Right ventricle myocardium inferior (tissue), 1 donor: ENCODE measurements at regions of chr3 and their contacts with region 1.

Region 1: GRCh38 chr3:40580494-40581091 is 55.8 kb downstream of the ZNF621 start:
- DNase-seq: no peak
- ATAC-seq: no peak

Region 2: GRCh38 chr3:40713795-40714194 is 133.2 kb after region 1 on chr3:
- intact Hi-C with region 1: loop called (anchors 5 kb)
- DNase-seq: no peak
- ATAC-seq: no peak

Region 3: GRCh38 chr3:40780291-40780924 is 199.8 kb after region 1 on chr3:
- intact Hi-C with region 1: loop called (anchors 5 kb)
- DNase-seq: peak; percentile 86
- ATAC-seq: peak; percentile 80

Region 4: DNA sequence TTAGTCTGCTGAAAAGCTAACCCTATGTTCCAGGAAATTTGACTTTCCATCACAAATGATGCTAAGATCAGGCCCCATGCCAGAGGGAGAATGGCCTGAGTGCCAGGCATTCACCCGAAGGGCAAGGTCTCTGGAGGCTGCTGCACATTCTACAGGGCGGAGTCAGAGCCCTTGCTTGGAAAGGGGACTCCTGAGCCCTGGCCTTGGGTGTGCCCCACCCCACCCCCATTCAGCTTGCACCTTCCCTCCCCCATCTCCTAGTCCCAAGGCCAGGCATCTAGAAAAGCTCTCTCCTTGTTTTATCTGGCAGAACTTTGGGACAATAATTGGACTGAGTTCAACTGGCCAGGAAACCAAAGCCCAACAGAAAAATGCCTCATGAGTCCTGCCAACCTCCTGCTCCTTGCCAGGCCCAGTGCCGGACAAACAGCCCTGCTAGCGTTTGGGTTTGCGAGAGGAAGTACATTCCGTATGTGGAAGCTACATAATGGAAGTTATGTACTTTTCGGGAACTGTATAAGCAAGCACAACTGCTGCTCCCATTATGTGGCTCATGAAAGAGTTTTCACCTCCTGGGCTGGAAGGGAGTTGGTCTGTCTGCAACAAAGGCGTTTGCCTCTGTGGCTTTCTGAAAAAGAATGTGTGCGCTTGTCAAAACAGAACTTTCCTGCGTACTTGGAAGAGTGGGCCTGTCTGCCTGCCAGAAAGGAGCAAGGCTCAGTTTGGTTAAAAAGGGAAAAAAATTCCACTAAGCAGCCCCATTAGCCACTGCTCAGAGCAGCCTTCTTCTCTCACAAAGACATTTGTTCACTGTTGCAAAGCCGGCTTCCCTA is 297.3 kb after region 1 on chr3:
- intact Hi-C with region 1: loop called (anchors 10 kb)
- DNase-seq: peak; percentile 78
- ATAC-seq: peak; percentile 87

Region 5: DNA sequence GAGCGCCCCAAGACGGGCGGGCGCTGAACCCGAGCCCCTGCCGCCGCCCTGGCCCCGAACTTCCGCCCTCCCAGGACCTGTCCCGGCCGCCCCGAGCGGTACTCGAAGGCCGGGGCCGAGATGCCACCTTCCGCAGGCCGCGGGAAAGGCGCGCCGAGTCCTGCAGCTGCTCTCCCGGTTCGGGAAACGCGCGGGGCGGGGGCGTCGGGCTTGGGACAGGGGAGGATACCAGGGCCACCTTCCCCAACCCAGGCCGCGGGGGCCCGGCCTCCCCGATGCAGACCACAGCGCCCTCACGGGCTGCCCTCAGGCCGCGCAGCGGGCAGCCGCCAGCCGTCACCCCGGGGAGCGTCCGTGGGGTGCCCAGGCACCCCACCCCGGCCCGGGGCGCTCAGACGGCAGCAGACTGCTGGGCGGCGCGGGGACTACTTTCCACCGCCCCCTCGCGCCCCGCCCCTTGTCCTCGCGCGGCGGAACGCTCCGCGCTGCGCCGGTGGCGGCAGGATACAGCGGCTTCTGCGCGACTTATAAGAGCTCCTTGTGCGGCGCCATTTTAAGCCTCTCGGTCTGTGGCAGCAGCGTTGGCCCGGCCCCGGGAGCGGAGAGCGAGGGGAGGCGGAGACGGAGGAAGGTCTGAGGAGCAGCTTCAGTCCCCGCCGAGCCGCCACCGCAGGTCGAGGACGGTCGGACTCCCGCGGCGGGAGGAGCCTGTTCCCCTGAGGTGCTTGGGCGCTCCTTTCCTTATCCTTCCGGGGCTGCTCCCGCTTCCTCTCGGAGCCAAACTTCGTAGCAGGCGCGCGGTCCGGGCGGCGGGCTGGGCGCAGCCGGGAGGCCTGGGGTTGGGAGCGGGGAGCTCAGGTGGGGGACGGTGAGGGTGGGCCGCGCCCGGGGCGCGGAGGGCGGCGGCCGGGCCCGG is 618.6 kb after region 1 on chr3 and contains the start of gene CTNNB1:
- intact Hi-C with region 1: loop called (anchors 2 kb)
- DNase-seq: peak; percentile 95
- ATAC-seq: peak; percentile 95
- total RNA-seq, gene CTNNB1: 160 TPM

Region 6: DNA sequence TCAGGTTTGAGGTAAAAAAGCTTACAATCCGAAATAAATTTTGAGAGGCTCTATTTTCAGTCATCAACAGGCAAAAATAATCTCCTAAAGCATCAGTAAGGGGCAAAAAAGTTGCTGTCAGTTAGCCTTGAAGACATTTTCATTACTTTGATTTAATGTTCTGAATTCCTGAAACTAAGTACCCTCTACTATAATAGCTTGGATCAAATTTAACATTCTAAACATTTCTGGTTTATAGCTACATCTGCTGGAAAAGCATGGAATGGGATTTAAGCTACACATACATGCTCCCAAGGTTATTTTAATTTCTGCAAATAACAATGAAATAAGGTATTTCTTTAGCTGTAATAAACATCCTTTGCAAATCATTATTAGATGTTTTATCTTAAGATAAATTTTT is 1135.9 kb after region 1 on chr3:
- intact Hi-C with region 1: loop called (anchors 5 kb)
- DNase-seq: no peak
- ATAC-seq: no peak

Region 7: GRCh38 chr3:41881233-41881821 is 1300.7 kb after region 1 on chr3:
- intact Hi-C with region 1: loop called (anchors 1 kb)
- DNase-seq: no peak
- ATAC-seq: no peak